ENCODE measurements at regions of chrX and their contacts with region 1.

Region 1: DNA sequence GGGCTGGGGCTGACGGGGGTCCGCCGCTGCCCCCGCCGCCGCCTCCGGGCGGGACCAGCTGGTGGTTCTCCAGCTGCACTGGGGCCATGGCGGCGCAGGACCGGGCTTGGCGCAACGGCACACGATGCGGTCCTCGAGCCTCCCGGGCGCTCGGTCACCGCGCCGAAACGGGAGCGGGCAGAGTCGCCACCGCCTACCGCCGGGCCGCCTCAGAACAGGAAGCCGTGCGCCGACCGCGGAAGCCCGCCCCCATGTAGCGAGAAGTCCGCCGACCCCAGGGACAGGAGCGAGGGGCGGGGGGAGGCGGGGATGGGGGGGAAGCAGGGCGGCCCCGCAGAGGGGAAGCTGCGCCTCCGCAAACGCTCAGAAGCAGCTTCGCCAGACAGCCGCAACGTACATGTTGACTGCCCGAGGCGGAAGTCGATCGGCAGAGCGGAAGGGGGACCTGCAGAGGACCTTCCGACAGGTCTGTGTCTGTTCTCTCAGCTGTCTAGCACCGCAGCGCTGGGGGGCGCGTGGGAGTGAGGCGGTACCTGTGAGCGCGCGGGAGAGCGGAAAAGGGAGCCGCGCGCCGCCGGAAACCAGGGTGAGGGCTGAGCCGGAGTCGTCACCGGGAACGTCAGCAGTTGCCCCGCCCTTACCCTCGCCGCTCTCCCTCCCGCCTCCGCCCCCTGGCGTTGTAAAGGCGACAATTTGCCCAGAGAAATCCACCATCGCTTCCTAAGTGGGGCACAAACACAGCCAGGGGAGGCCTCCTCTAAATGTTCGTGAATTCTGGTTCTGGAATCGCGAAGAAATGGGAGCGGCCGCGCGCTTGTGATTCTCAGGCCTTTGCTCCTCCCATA is at the start of gene MED14:
- DNase-seq: peak; percentile 73 to 86 (median 82)
- H3K4me3 ChIP-seq: peak within 1 kb of the TSS; percentile 65 to 85 (median 72)
- H3K4me3 Mint-ChIP-seq: peak within 1 kb of the TSS; percentile 82 to 89
- H3K27ac ChIP-seq: peak within 1 kb of the TSS; percentile 96 to 98
- H3K27ac Mint-ChIP-seq: peak within 1 kb of the TSS; percentile 98 to 99 (median 99)
- H3K4me1 ChIP-seq: peaks cover 12 to 32% of the 10 kb centered on the region in 2 donors
- H3K4me1 Mint-ChIP-seq: peaks cover 37% of the 10 kb centered on the region
- H3K27me3 ChIP-seq: peaks cover 0 to 51% of the 10 kb centered on the region in 2 donors
- H3K27me3 Mint-ChIP-seq: peaks cover 0 to 61% (median 0%) of the 10 kb centered on the region in 3 donors
- CTCF ChIP-seq: peak; percentile 45
- polyA plus RNA-seq, gene MED14: 3.6 to 20.4 (median 6.8) TPM

Region 2: GRCh38 chrX:40374486-40374885 is 361.1 kb before region 1 on chrX:
- intact Hi-C with region 1: no loop called
- DNase-seq: no peak
- H3K4me3 ChIP-seq: no peak overlapping the region
- H3K4me3 Mint-ChIP-seq: no peak overlapping the region
- H3K27ac ChIP-seq: no peak overlapping the region
- H3K27ac Mint-ChIP-seq: no peak overlapping the region
- H3K4me1 ChIP-seq: peaks cover under 1 to 1% of the 10 kb centered on the region in 2 donors
- H3K4me1 Mint-ChIP-seq: peaks cover 13% of the 10 kb centered on the region
- H3K27me3 ChIP-seq: no peaks in the 10 kb centered on the region
- H3K27me3 Mint-ChIP-seq: peaks cover 2 to 14% (median 3%) of the 10 kb centered on the region in 3 donors
- CTCF ChIP-seq: no peak

Region 3: DNA sequence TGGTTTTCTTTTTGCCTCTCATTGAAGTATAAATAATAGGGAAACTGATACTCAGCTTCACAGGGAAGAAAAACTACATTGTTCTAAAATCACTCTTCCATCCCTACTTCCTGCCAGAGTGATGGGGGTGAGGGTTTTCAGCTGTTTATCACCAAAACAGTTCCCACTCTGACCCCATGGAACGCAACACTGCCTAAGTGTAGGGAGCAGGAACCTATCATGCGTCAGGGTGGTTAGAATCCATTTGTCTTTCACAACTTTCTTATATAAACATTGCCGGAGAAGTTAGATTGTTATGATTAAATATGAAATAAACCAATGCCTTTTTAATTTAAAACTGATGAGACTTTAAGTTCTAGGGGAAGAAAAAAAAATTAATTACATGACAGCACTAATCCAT is 128.2 kb before region 1 on chrX:
- intact Hi-C with region 1: no loop called
- DNase-seq: no peak
- H3K4me3 ChIP-seq: no peak overlapping the region
- H3K4me3 Mint-ChIP-seq: no peak overlapping the region
- H3K27ac ChIP-seq: no peak overlapping the region
- H3K27ac Mint-ChIP-seq: peak overlapping the region in 1 of 7 donors; percentile 1
- H3K4me1 ChIP-seq: no peaks in the 10 kb centered on the region
- H3K4me1 Mint-ChIP-seq: no peaks in the 10 kb centered on the region
- H3K27me3 ChIP-seq: peaks cover 0 to 22% of the 10 kb centered on the region in 2 donors
- H3K27me3 Mint-ChIP-seq: peaks cover 0 to 26% (median 0%) of the 10 kb centered on the region in 3 donors
- CTCF ChIP-seq: no peak

Region 4: DNA sequence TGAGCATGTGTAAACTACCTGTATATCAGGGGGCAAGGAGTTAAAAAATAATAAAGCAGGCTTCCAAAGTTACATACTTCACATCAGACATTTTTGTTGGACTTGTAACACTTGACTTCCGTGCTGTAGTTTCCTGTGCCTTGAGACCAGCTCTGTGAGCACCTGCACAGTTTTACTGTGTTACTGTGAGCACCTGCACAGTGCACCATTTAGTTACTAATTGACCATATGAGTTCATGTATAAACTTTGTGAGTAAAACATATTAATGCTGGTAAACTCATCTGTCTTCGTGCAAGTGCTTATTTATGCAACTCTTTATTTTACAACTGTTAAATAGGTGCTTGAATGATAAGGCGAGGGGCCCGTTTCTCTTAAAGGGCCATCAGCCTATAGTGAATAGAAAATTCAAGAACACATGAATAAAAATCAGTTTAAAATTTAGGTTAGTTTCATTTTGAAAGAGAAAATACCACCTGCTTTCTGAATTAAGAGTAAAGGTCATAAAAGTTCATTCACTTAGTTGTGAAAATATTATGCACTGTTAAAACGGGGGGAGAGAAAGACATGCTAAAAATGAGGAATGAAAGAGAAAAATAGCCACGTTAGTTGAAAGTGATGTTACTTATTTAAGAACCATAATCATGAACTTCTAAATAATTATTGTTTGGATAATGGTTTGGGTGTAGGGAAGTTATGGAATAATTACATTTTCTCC is 392.1 kb after region 1 on chrX:
- intact Hi-C with region 1: loop called in 1 of 2 experiments (anchors 10 kb)
- DNase-seq: no peak
- H3K4me3 ChIP-seq: no peak overlapping the region
- H3K4me3 Mint-ChIP-seq: no peak overlapping the region
- H3K27ac ChIP-seq: no peak overlapping the region
- H3K27ac Mint-ChIP-seq: no peak overlapping the region
- H3K4me1 ChIP-seq: no peaks in the 10 kb centered on the region
- H3K4me1 Mint-ChIP-seq: peaks cover 3% of the 10 kb centered on the region
- H3K27me3 ChIP-seq: peaks cover 0 to 4% of the 10 kb centered on the region in 2 donors
- H3K27me3 Mint-ChIP-seq: peaks cover 0 to 14% (median 0%) of the 10 kb centered on the region in 3 donors
- CTCF ChIP-seq: no peak

Measured in CD14-positive monocyte (primary cell).